ENCODE measurements at regions of chr2 and their contacts with region 1.

Region 1: DNA sequence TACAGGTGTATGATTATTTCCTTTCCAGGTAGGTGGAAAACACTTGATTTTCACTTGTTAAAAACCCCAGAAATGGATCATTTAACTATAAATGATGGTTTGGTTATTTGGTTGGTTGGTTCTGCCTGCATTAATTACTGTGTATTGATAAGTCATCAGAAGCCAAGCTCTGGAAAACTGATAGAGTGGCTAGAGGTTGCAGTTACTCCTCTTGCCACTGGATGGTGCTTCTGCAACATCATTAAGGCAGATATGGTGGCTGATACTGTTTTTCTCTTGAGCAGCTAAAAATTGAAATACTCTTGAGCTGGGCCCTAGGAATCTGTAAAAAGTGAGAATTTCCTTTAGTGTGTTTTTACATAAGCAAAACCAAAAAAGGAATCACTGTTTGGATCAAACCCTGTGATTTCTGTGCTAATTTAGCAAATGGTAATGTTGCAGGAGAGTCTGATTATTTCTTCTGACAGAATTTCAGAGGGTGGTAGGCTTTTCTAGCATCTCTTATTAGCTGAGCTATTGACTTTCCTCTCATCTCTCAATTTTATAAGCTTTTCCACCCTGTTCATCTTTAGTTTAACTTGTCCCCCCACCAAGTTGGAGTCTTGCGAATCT is 54.3 kb downstream of the RAB10 start:
- DNase-seq: no peak
- H3K4me3 ChIP-seq: no peak overlapping the region
- H3K27ac ChIP-seq: no peak overlapping the region
- H3K4me1 ChIP-seq: peaks cover 0 to 4% (median 1%) of the 10 kb centered on the region in 4 experiments; a peak in 3 of 7 replicates
- H3K27me3 ChIP-seq: no peaks in the 10 kb centered on the region
- CTCF ChIP-seq: peak in 2 of 3 experiments; percentile 65 to 80; a peak in 3 of 4 replicates
- EP300 ChIP-seq: no peak
- POLR2A ChIP-seq: no peak
- RAD21 ChIP-seq: peak; percentile 81 to 84

Region 2: DNA sequence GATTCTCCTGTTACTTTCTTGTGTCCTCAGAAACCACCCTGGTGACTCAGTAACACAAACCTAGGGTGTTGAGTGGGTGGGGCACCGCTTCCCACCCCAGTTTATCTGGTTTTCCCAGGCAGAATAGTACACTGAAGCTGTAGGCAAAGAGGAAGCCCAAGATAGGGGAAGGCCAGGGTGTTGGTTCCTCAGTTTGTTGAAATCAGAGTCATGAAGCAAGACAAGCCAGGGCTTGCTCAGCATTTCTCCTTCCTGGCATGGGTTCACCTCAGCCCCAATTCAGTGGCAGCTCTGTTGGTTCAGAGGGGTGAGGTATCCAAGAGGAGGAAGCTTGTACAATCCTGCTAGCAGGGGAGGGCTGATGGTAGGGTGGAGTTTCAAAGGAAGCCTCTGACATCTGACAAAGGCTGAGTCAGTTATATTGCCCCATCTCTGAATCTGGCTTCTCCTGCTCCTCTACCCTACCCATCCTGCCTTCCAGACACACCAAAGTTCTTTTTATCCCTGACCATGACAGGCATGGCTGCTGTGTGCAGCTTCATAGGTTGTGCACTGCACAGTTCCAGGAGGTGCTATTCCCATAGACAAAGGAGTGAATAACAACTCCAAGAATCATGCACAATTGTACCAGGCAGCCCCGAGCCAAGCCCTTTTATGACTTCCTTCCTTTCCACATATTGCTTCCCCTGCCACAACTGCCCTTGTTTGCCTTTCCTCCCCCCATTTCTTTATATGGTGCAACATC is 79.1 kb before region 1 on chr2:
- CTCF ChIA-PET with region 1: no interaction called
- POLR2A ChIA-PET with region 1: no interaction called
- DNase-seq: no peak
- H3K4me3 ChIP-seq: no peak overlapping the region
- H3K27ac ChIP-seq: no peak overlapping the region
- H3K4me1 ChIP-seq: peaks cover 3 to 8% (median 4%) of the 10 kb centered on the region in 4 experiments; a peak in 4 of 7 replicates
- H3K27me3 ChIP-seq: no peaks in the 10 kb centered on the region
- CTCF ChIP-seq: no peak
- EP300 ChIP-seq: no peak
- POLR2A ChIP-seq: no peak
- RAD21 ChIP-seq: no peak

Region 3: DNA sequence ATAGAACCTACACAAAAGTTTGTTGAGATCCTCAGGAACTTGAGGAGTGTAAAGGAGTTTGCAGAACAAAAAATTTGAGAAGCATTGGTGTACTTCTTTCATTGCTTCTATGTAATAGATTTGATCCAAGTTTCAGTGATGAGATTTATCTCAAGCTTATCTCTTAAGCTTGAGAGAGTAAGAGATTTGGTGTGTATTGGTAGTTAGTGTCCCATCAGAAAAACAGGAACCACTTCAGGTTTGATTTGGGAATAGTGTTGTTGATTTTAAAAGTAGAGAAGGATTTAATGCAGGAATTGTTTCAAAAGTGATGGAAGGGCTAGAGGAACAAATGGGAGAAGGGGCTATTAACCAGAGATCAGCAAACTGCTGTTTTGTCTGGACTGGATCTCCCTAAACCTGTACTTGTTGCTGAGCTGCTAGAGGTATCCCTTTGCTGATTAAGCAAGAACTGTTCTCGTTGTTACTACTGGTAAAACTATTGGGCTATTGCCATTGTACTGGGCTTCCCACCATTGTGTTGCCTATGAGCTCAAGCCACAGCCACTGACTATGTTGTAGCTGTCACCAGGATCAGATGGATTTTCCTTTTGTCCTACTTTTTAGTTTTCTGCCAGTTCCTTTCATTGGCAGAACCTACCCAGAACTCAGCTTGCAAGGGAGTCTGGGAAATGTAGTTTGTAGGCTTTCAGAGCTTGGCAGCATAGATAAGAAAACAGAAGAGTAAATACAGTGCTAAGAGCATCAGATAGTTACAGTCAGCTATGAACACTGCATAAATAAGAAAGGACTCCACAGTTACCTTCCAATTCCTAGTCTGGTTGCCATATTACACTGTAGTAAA is 15.0 kb before region 1 on chr2:
- CTCF ChIA-PET with region 1: interaction called, 16 read pairs
- POLR2A ChIA-PET with region 1: interaction called, 23 read pairs
- DNase-seq: no peak
- H3K4me3 ChIP-seq: no peak overlapping the region
- H3K27ac ChIP-seq: no peak overlapping the region
- H3K4me1 ChIP-seq: peaks cover 0 to 13% (median 2%) of the 10 kb centered on the region in 4 experiments; a peak in 5 of 7 replicates
- H3K27me3 ChIP-seq: no peaks in the 10 kb centered on the region
- CTCF ChIP-seq: no peak
- EP300 ChIP-seq: no peak
- POLR2A ChIP-seq: no peak
- RAD21 ChIP-seq: no peak

Region 4: DNA sequence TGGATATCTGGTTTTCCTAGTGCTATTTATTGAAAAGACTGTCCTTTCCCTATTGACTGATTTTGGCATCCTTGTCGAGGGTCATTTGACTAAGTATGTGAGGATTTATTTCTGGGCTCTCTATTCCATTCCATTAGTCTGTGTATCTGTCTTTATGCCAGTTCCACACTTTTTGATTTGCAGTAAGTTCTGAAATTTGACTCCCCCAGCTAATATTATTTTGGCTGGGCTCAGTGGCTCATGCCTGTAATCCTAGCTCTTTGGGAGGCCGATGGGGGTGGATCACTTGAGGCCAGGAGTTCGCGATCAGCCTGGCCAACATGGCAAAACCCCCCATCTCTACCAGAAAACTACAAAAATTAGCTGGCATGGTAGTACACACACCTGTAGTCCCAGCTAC is 37.9 kb after region 1 on chr2:
- CTCF ChIA-PET with region 1: interaction called, 12 read pairs
- POLR2A ChIA-PET with region 1: no interaction called
- DNase-seq: no peak
- H3K4me3 ChIP-seq: no peak overlapping the region
- H3K27ac ChIP-seq: no peak overlapping the region
- H3K4me1 ChIP-seq: no peaks in the 10 kb centered on the region
- H3K27me3 ChIP-seq: no peaks in the 10 kb centered on the region
- CTCF ChIP-seq: no peak
- EP300 ChIP-seq: no peak
- POLR2A ChIP-seq: no peak
- RAD21 ChIP-seq: no peak